ENCODE measurements at regions of chr5 and their contacts with region 1.

Region 1: DNA sequence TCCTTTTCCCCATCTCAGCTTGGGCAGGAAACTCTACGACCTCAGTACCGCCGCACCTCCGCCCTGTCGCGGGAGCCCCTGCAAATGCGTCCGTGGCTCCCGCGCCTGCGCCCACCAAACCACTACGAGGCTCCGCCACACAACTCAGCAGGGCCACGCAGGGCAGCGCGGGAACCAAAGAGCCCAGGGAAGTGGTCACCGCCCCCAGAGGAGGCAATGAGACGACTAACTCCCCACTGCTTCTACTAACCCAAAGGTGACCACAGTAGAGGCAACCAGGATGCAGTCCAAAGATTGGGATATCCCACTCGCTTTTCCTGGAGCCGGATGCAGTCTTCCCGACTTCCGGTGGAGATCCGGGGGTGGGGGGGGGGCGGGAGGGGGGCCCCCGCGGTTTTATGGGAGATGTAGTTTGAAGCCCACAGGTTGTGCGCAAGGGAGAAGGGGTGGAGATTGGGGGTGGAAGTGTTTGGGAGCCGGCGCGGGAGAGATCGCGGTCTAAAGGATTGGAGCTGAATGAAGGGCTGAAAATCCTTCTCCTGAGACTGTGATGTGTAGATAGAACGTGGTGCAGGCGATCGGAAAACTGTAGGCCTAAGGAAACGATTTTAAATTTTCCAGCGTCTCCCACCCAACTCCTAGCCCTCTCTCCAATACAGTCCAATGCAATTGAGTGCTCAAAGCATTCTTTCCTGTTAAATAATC is at the start of gene NUDT12:
- DNase-seq: peak; percentile 20
- H3K4me3 ChIP-seq: peak within 1 kb of the TSS; percentile 83
- H3K27ac ChIP-seq: peak within 1 kb of the TSS; percentile 82
- H3K27me3 ChIP-seq: no peaks in the 10 kb centered on the region
- CTCF ChIP-seq: no peak
- polyA plus RNA-seq, gene NUDT12: 8.1 and 12.3 TPM in 2 replicates

Region 2: DNA sequence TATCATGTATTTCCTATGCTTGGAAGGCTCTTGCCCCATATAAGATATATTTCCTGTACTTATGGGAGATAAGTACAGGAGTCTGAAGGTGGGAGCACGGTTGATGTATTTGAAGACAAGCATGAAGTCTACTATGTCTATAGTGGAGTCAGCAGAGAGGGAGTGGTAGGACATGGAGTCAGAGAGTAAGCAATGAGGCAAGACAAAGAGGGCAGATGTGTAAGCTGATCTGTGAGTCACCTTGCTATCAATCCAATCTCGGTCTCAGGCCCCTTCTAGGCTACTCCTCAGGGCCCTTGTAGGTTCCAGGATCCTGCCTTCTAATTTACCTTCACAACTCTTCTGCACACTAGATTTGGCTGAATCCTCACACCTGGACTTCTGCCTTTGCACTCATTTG is 198.5 kb before region 1 on chr5:
- CTCF ChIA-PET with region 1: no interaction called
- POLR2A ChIA-PET with region 1: no interaction called
- DNase-seq: no peak
- H3K4me3 ChIP-seq: no peak overlapping the region
- H3K27ac ChIP-seq: no peak overlapping the region
- H3K27me3 ChIP-seq: no peaks in the 10 kb centered on the region
- CTCF ChIP-seq: no peak

Region 3: GRCh38 chr5:103938146-103938695 is 375.6 kb after region 1 on chr5:
- CTCF ChIA-PET with region 1: interaction called, 10 read pairs
- POLR2A ChIA-PET with region 1: no interaction called
- DNase-seq: no peak
- H3K4me3 ChIP-seq: no peak overlapping the region
- H3K27ac ChIP-seq: no peak overlapping the region
- H3K27me3 ChIP-seq: no peaks in the 10 kb centered on the region
- CTCF ChIP-seq: no peak